ENCODE measurements at regions of chr11 and their contacts with region 1.

Region 1: GRCh38 chr11:113730887-113731726 is 25.0 kb upstream of the TMPRSS5 start:
- DNase-seq: peak; percentile 64
- ATAC-seq: peak; percentile 84
- H3K4me3 ChIP-seq: no peak overlapping the region
- H3K27ac ChIP-seq: no peak overlapping the region
- H3K4me1 ChIP-seq: peaks cover 4% of the 10 kb centered on the region; the same call in 1 of the 2 replicates
- H3K27me3 ChIP-seq: no peaks in the 10 kb centered on the region
- CTCF ChIP-seq: peak; percentile 66
- POLR2A ChIP-seq: no peak
- RAD21 ChIP-seq: peak; percentile 79

Region 2: GRCh38 chr11:113305440-113306336 is 425.4 kb before region 1 on chr11:
- CTCF ChIA-PET with region 1: interaction called, 19 read pairs
- POLR2A ChIA-PET with region 1: no interaction called
- dilution Hi-C with region 1: no loop called
- in situ Hi-C with region 1: loop called (anchors 5 kb)
- intact Hi-C with region 1: loop called (anchors 1 kb)
- DNase-seq: peak; percentile 51
- ATAC-seq: peak; percentile 99
- H3K4me3 ChIP-seq: no peak overlapping the region
- H3K27ac ChIP-seq: no peak overlapping the region
- H3K4me1 ChIP-seq: no peaks in the 10 kb centered on the region
- H3K27me3 ChIP-seq: peaks cover 3% of the 10 kb centered on the region; the same call in 1 of the 2 replicates
- CTCF ChIP-seq: peak; percentile 96
- POLR2A ChIP-seq: peak; percentile 51; the same call in 1 of the 2 replicates
- RAD21 ChIP-seq: peak; percentile 99

Region 3: GRCh38 chr11:113314389-113315301 is 416.5 kb before region 1 on chr11 and contains the start of gene TTC12:
- CTCF ChIA-PET with region 1: interaction called, 7 read pairs
- POLR2A ChIA-PET with region 1: no interaction called
- dilution Hi-C with region 1: no loop called
- in situ Hi-C with region 1: loop called (anchors 5 kb)
- intact Hi-C with region 1: loop called (anchors 2 kb)
- DNase-seq: peak; percentile 78
- ATAC-seq: peak; percentile 100
- H3K4me3 ChIP-seq: peak within 1 kb of the TSS; percentile 86
- H3K27ac ChIP-seq: peak within 1 kb of the TSS; percentile 79
- H3K4me1 ChIP-seq: no peaks in the 10 kb centered on the region; the same call in none of the 2 replicates
- H3K27me3 ChIP-seq: no peaks in the 10 kb centered on the region
- CTCF ChIP-seq: no peak
- POLR2A ChIP-seq: peak; percentile 48
- RAD21 ChIP-seq: no peak
- total RNA-seq, gene TTC12: 14.4 and 14.7 TPM in 2 replicates

Region 4: DNA sequence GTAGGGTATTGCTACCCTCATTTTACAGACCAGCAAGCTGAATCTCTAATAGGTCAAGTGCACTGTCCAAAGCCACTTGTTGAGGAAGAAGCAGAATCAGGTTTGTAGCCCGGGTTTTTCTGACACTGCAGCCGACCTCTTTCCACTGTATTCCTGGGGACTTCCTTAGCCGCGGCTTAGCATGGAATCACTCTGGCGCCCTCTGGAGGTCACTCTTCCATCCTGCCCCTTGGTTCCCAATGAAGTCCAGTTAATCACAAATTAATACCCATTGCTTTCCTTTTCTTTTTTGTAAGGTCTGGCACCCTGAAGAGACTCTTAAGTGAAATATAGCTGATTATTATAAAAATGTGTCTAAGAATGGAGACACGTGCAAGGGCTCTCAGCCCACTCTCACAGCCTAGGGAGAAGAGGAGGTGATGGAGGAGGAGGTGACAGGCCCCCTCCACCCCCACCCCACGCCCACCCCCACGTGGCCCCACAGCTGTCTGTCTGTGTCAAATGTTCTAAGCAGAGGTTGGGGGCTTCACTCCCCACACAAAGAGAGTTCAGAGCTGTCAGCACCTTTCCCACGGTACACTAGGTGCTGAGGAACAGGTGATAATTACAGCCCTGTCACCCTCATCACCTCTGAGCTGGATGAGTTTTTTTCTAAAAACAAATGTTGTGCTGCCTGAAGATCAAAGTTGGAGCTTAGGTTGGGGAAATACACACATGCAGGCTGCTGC is 198.2 kb before region 1 on chr11:
- CTCF ChIA-PET with region 1: interaction called, 3 read pairs
- POLR2A ChIA-PET with region 1: no interaction called
- dilution Hi-C with region 1: no loop called
- in situ Hi-C with region 1: no loop called
- intact Hi-C with region 1: loop called (anchors 2 kb)
- DNase-seq: peak; percentile 71
- ATAC-seq: peak; percentile 98
- H3K4me3 ChIP-seq: no peak overlapping the region
- H3K27ac ChIP-seq: no peak overlapping the region
- H3K4me1 ChIP-seq: no peaks in the 10 kb centered on the region
- H3K27me3 ChIP-seq: peaks cover 28% of the 10 kb centered on the region
- CTCF ChIP-seq: peak; percentile 86
- POLR2A ChIP-seq: no peak
- RAD21 ChIP-seq: peak; percentile 81

Region 5: GRCh38 chr11:113587308-113587739 is 143.8 kb before region 1 on chr11:
- CTCF ChIA-PET with region 1: interaction called, 11 read pairs
- POLR2A ChIA-PET with region 1: no interaction called
- dilution Hi-C with region 1: no loop called
- in situ Hi-C with region 1: no loop called
- intact Hi-C with region 1: no loop called
- DNase-seq: peak; percentile 4
- ATAC-seq: no peak
- H3K4me3 ChIP-seq: no peak overlapping the region
- H3K27ac ChIP-seq: no peak overlapping the region
- H3K4me1 ChIP-seq: no peaks in the 10 kb centered on the region
- H3K27me3 ChIP-seq: peaks cover 8% of the 10 kb centered on the region
- CTCF ChIP-seq: no peak
- POLR2A ChIP-seq: no peak
- RAD21 ChIP-seq: no peak

Measured in IMR-90 (cell line).